WTC11 (cell line): ENCODE measurements at regions of chr19 and their contacts with region 1.

Region 1: GRCh38 chr19:49017666-49018351 is 918 bp upstream of the LHB start:
- DNase-seq: peak; percentile 66
- ATAC-seq: peak; percentile 71
- H3K4me3 Mint-ChIP-seq: peak overlapping the region; percentile 73
- H3K27ac Mint-ChIP-seq: no peak overlapping the region
- H3K4me1 Mint-ChIP-seq: peaks cover 23% of the 10 kb centered on the region
- H3K27me3 Mint-ChIP-seq: peaks cover 45% of the 10 kb centered on the region
- CTCF ChIP-seq: no peak

Region 2: DNA sequence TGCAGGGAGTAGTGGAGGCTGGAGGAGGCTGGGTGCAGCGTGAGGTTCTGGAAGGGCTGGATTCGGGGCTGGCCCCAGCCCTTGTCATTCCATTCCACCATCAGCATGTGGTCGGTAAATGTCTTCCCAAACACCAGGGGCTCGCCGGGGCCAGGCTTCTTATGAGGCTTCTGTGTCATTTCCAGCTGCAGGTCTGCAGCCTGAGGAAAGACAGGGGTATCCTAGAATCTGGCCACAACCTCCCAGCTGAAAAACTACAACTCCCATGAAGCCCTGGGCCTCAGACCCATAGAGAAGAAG is 211.3 kb before region 1 on chr19:
- CTCF ChIA-PET with region 1: no interaction called
- POLR2A ChIA-PET with region 1: no interaction called
- DNase-seq: peak; percentile 76
- ATAC-seq: no peak
- H3K4me3 Mint-ChIP-seq: peak overlapping the region; percentile 36; the same call in 1 of the 2 replicates
- H3K27ac Mint-ChIP-seq: peak overlapping the region; percentile 79; the same call in 1 of the 2 replicates
- H3K4me1 Mint-ChIP-seq: peaks cover 32% of the 10 kb centered on the region
- H3K27me3 Mint-ChIP-seq: peaks cover 17% of the 10 kb centered on the region
- CTCF ChIP-seq: no peak

Region 3: GRCh38 chr19:49056010-49056901 is 38.4 kb after region 1 on chr19:
- CTCF ChIA-PET with region 1: interaction called, 16 read pairs
- POLR2A ChIA-PET with region 1: interaction called, 3 read pairs
- DNase-seq: peak; percentile 76
- ATAC-seq: peak; percentile 82
- H3K4me3 Mint-ChIP-seq: peak overlapping the region; percentile 71
- H3K27ac Mint-ChIP-seq: no peak overlapping the region
- H3K4me1 Mint-ChIP-seq: peaks cover 14% of the 10 kb centered on the region
- H3K27me3 Mint-ChIP-seq: peaks cover 75% of the 10 kb centered on the region
- CTCF ChIP-seq: peak; percentile 19; the same call in 1 of the 2 replicates